ENCODE measurements at regions of chr3 and their contacts with region 1.

Region 1: GRCh38 chr3:112605285-112605684 is 35.7 kb downstream of the CCDC80 start:
- DNase-seq: peak; percentile 98
- H3K4me3 ChIP-seq: peak overlapping the region in 1 of 3 experiments; percentile 38
- H3K27ac ChIP-seq: peak overlapping the region; percentile 94
- H3K4me1 ChIP-seq: peaks cover 17% of the 10 kb centered on the region
- H3K27me3 ChIP-seq: no peaks in the 10 kb centered on the region
- CTCF ChIP-seq: no peak
- POLR2A ChIP-seq: no peak

Region 2: GRCh38 chr3:112623213-112623612 is 17.9 kb after region 1 on chr3:
- CTCF ChIA-PET with region 1: interaction called, 11 read pairs
- POLR2A ChIA-PET with region 1: interaction called, 8 read pairs
- dilution Hi-C with region 1: no loop called
- intact Hi-C with region 1: loop called (anchors 1 kb)
- DNase-seq: no peak
- H3K4me3 ChIP-seq: no peak overlapping the region
- H3K27ac ChIP-seq: no peak overlapping the region
- H3K4me1 ChIP-seq: peaks cover 28% of the 10 kb centered on the region
- H3K27me3 ChIP-seq: no peaks in the 10 kb centered on the region
- CTCF ChIP-seq: no peak
- POLR2A ChIP-seq: no peak

Region 3: GRCh38 chr3:112629425-112629824 is 24.1 kb after region 1 on chr3:
- CTCF ChIA-PET with region 1: interaction called, 9 read pairs
- POLR2A ChIA-PET with region 1: interaction called, 3 read pairs
- dilution Hi-C with region 1: no loop called
- intact Hi-C with region 1: loop called (anchors 1 kb)
- DNase-seq: peak; percentile 76
- H3K4me3 ChIP-seq: no peak overlapping the region
- H3K27ac ChIP-seq: peak overlapping the region; percentile 50
- H3K4me1 ChIP-seq: peaks cover 46% of the 10 kb centered on the region
- H3K27me3 ChIP-seq: no peaks in the 10 kb centered on the region
- CTCF ChIP-seq: no peak
- POLR2A ChIP-seq: no peak

Region 4: DNA sequence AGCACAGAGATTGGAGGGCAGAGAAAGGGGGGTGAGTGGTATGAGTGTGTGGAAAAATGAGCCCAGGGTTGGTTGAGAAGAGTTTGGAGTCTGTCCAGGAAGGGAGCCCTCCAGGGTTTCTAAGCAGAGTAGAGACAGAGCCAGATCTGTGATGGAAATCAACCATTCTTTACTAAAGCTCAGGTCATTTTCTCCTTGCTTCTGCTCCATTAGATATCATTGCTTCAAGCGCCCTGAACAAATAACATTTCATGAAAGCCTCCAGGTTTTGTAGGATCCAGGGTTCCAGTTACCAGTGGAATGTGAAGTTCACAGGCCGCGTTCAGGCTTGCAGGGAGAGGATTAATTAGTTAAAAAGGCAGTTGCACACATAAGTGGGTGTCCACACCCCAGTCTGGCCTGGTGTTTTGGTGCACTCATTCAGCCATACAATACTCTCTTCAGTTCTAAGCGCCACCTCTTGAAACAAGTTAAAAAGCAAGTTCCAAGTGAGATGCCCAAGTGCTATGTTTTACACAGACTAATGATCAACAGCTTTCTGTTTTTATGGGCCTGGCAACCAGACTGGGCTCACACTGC is 589.6 kb after region 1 on chr3:
- CTCF ChIA-PET with region 1: no interaction called
- POLR2A ChIA-PET with region 1: no interaction called
- dilution Hi-C with region 1: no loop called
- intact Hi-C with region 1: no loop called
- DNase-seq: no peak
- H3K4me3 ChIP-seq: no peak overlapping the region
- H3K27ac ChIP-seq: no peak overlapping the region
- H3K4me1 ChIP-seq: no peaks in the 10 kb centered on the region
- H3K27me3 ChIP-seq: peaks cover 0 to 4% of the 10 kb centered on the region in 2 experiments
- CTCF ChIP-seq: no peak
- POLR2A ChIP-seq: no peak